Naive thymus-derived CD4-positive, alpha-beta T cell (primary cell): ENCODE measurements at regions of chr19 and their contacts with region 1.

Region 1: DNA sequence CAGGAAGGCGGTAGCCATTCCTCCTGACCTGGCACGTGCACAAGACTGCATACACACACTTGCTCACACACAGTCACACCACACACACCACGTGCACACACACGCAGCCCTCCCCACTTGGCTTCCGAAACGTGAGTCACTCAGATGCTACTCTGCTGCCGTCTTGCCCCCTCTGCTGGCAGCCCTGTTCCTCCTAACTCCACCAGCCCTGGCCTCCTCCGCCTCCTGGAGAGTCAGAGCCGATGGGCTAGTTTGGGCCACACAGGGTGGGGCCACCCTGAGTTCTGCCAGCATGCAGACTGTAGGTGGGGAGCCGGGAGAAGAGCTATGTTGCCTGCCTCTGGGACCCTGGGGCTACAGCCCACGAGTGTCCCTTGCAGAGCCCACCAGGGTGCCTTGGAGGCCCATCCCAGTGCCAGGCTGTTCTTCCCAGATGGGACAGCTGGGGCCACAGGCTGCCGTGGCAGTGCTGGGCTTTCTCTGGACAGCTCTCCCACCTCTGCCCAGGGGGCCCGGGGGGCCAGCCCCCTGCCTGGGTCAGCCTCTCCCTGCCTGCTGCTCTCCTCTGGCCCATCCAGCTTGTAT is 12.1 kb downstream of the PIN1 start:
- DNase-seq: no peak
- ATAC-seq: peak; percentile 47
- H3K4me3 ChIP-seq: no peak overlapping the region
- H3K4me3 Mint-ChIP-seq: peak overlapping the region in 1 of 10 donors; percentile 56
- H3K27ac ChIP-seq: no peak overlapping the region
- H3K27ac Mint-ChIP-seq: peak overlapping the region in 3 of 9 donors; percentile 65 to 73 (median 70)
- H3K4me1 ChIP-seq: no peaks in the 10 kb centered on the region
- H3K4me1 Mint-ChIP-seq: peaks cover 3 to 49% (median 25%) of the 10 kb centered on the region in 7 donors
- H3K27me3 ChIP-seq: no peaks in the 10 kb centered on the region
- H3K27me3 Mint-ChIP-seq: no peaks in the 10 kb centered on the region

Region 2: DNA sequence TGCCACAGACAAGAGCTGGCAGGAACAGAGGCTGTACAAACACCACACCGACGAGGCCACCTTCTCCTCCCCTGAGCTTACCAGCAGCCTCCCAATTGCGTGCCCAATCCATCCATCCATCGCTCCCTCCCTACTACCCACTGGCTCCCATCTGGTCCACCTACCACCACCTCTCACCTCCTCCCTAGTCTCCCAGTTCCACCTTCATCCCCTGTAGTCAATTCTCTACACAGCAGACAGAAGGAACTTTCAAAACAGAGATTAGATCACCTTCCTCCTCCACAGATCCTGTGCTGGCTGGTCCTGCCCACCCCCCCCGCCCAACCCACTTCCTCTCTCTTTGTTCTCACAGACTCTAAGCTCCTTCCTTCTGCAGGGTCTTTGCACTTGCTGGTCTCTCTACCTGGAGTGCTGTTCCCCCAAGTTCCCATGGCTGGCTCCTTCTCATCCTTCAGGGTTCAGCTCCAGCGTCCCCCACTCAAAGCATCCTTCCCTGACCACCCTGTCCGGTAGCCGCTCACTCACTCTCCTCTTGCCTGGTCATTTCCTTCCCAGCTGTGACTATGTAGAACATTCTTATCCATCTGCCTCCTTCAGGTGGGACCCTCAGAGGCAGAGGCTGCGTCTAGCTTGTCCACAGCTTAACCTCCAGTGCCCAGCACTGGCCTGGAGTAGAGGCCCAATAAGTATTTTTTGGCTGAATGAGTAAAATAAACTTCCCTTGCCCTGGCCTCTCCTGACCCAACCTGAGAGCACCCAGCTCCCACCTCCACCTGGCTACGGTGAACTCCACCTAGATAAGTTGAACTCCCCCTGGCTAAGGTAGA is 11.0 kb after region 1 on chr19:
- CTCF ChIA-PET with region 1: interaction called, 13 read pairs
- POLR2A ChIA-PET with region 1: interaction called, 4 read pairs
- intact Hi-C with region 1: loop called in 1 of 2 experiments (anchors 2 kb)
- DNase-seq: peak in 7 of 9 donors; percentile 19 to 64 (median 57)
- ATAC-seq: peak; percentile 82
- H3K4me3 ChIP-seq: peak overlapping the region; percentile 70
- H3K4me3 Mint-ChIP-seq: peak overlapping the region; percentile 91 to 100 (median 96)
- H3K27ac ChIP-seq: peak overlapping the region; percentile 67
- H3K27ac Mint-ChIP-seq: peak overlapping the region; percentile 94 to 99 (median 98)
- H3K4me1 ChIP-seq: peaks cover 56 to 72% of the 10 kb centered on the region in 2 donors
- H3K4me1 Mint-ChIP-seq: peaks cover 48 to 96% (median 85%) of the 10 kb centered on the region in 7 donors
- H3K27me3 ChIP-seq: no peaks in the 10 kb centered on the region
- H3K27me3 Mint-ChIP-seq: no peaks in the 10 kb centered on the region

Region 3: DNA sequence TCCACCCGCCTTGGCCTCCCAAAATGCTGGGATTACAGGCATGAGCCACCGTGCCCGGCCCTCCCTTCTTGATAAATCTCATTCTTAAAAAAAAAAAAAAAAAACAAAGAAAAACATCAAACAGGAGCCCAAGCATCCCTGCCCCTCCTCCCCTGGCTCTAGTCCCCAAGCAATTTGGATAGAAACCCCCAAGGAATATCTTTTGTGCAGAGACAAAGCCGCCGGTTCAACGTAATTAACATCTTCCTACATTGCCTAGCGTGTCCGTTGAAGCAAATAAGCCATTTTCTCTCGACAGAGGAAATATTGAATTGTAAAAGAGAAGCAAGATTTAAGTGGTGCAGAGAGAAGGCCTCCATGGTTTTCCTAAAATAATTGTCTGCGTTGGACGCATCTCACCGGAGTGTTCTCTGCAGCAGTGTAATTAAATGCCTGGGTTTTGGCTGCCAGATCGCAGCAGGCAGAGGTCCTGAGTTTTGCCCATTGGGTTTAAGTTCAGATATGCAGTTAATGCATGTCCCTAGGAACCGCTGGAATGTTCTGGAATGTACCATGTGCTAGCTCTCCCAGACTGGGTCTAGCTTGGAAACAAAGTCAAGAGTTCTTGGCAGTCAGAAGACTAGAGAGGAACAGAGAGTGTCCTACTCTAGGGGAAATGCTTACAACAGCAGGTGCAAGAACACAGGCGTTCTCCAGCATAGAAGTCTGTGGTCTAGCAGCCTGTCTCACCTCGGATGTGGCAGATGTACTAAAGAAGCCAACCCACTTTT is 18.7 kb after region 1 on chr19:
- CTCF ChIA-PET with region 1: interaction called, 13 read pairs
- POLR2A ChIA-PET with region 1: interaction called, 7 read pairs
- intact Hi-C with region 1: loop called in 1 of 2 experiments (anchors 2 kb)
- DNase-seq: peak in 6 of 9 donors; percentile 67 to 80 (median 72)
- ATAC-seq: peak; percentile 88
- H3K4me3 ChIP-seq: peak overlapping the region; percentile 25
- H3K4me3 Mint-ChIP-seq: peak overlapping the region; percentile 43 to 86 (median 80)
- H3K27ac ChIP-seq: peak overlapping the region; percentile 6
- H3K27ac Mint-ChIP-seq: peak overlapping the region; percentile 72 to 97 (median 86)
- H3K4me1 ChIP-seq: peaks cover 39 to 63% of the 10 kb centered on the region in 2 donors
- H3K4me1 Mint-ChIP-seq: peaks cover 35 to 64% (median 57%) of the 10 kb centered on the region in 7 donors
- H3K27me3 ChIP-seq: no peaks in the 10 kb centered on the region
- H3K27me3 Mint-ChIP-seq: no peaks in the 10 kb centered on the region

Region 4: GRCh38 chr19:9914315-9915207 is 67.4 kb after region 1 on chr19:
- CTCF ChIA-PET with region 1: interaction called, 12 read pairs
- POLR2A ChIA-PET with region 1: interaction called, 4 read pairs
- intact Hi-C with region 1: loop called (anchors 1 kb)
- DNase-seq: peak; percentile 59 to 83 (median 72)
- ATAC-seq: peak; percentile 95
- H3K4me3 ChIP-seq: peak overlapping the region; percentile 64
- H3K4me3 Mint-ChIP-seq: peak overlapping the region; percentile 66 to 86 (median 72)
- H3K27ac ChIP-seq: no peak overlapping the region
- H3K27ac Mint-ChIP-seq: no peak overlapping the region
- H3K4me1 ChIP-seq: peaks cover 3 to 5% of the 10 kb centered on the region in 2 donors
- H3K4me1 Mint-ChIP-seq: peaks cover 6 to 12% (median 9%) of the 10 kb centered on the region in 7 donors
- H3K27me3 ChIP-seq: peaks cover 0 to 13% of the 10 kb centered on the region in 2 donors
- H3K27me3 Mint-ChIP-seq: peaks cover 22 to 33% (median 27%) of the 10 kb centered on the region in 5 donors

Region 5: DNA sequence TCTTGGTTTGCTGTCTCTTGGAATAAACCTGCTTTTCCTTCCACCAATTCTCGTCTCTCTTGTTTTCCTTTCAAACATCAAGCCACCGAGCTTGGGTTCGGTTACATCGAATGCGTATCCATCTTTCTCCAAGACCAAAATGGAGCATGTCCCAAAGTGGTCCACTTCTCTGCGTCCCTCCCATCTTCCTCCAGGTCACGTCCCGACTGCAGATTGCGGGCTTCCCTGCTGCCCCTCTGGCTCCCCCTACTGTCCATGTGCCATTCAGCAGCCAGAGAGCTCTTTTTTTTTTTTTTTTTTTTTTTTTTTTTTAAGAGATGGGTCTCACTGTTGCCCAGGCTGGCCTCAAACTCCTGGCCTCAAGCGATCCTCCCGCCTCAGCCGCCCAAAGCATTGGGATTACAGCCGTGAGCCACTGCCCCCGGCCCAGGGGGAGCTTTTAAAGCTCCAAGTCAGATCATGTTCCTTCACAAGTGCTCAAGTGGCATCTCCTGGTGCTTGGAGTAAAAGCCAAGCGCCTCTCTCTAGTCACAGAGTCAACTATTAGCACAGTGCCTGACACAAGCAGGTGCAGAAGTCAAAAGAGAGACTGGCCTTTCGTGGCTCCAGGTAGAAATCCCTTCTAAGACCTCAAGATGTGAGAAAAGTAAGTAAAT is 153.1 kb after region 1 on chr19:
- CTCF ChIA-PET with region 1: no interaction called
- POLR2A ChIA-PET with region 1: no interaction called
- intact Hi-C with region 1: loop called in 1 of 2 experiments (anchors 5 kb)
- DNase-seq: peak; percentile 34 to 74 (median 48)
- ATAC-seq: peak; percentile 54
- H3K4me3 ChIP-seq: no peak overlapping the region
- H3K4me3 Mint-ChIP-seq: no peak overlapping the region
- H3K27ac ChIP-seq: no peak overlapping the region
- H3K27ac Mint-ChIP-seq: peak overlapping the region in 2 of 9 donors; percentile 17 to 28
- H3K4me1 ChIP-seq: peaks cover 0 to 3% of the 10 kb centered on the region in 2 donors
- H3K4me1 Mint-ChIP-seq: peaks cover 0 to 8% (median 6%) of the 10 kb centered on the region in 7 donors
- H3K27me3 ChIP-seq: no peaks in the 10 kb centered on the region
- H3K27me3 Mint-ChIP-seq: peaks cover 5 to 54% (median 45%) of the 10 kb centered on the region in 5 donors